ENCODE measurements at regions of chr7 and their contacts with region 1.

Region 1: GRCh38 chr7:31122649-31123058 is 70.5 kb downstream of the ADCYAP1R1 start:
- DNase-seq: peak; percentile 65 to 74
- H3K4me3 ChIP-seq: no peak overlapping the region
- H3K27ac ChIP-seq: no peak overlapping the region
- H3K4me1 ChIP-seq: no peaks in the 10 kb centered on the region
- H3K27me3 ChIP-seq: no peaks in the 10 kb centered on the region
- CTCF ChIP-seq: peak; percentile 64 to 86 (median 74)
- POLR2A ChIP-seq: no peak

Region 2: GRCh38 chr7:30983042-30983913 is 139.4 kb before region 1 on chr7:
- intact Hi-C with region 1: loop called (anchors 10 kb)
- DNase-seq: peak; percentile 75 to 88
- H3K4me3 ChIP-seq: no peak overlapping the region
- H3K27ac ChIP-seq: no peak overlapping the region
- H3K4me1 ChIP-seq: peaks cover 0 to 4% of the 10 kb centered on the region in 2 donors
- H3K27me3 ChIP-seq: no peaks in the 10 kb centered on the region
- CTCF ChIP-seq: peak; percentile 87 to 94 (median 89)
- POLR2A ChIP-seq: peak in 1 of 2 donors; percentile 16

Region 3: GRCh38 chr7:31302356-31302755 is 179.7 kb after region 1 on chr7:
- intact Hi-C with region 1: no loop called
- DNase-seq: no peak
- H3K4me3 ChIP-seq: no peak overlapping the region
- H3K27ac ChIP-seq: no peak overlapping the region
- H3K4me1 ChIP-seq: no peaks in the 10 kb centered on the region
- H3K27me3 ChIP-seq: no peaks in the 10 kb centered on the region
- CTCF ChIP-seq: no peak
- POLR2A ChIP-seq: no peak

Measured in uterus (tissue), 4 donors.